ENCODE measurements at regions of chr11 and their contacts with region 1.

Region 1: DNA sequence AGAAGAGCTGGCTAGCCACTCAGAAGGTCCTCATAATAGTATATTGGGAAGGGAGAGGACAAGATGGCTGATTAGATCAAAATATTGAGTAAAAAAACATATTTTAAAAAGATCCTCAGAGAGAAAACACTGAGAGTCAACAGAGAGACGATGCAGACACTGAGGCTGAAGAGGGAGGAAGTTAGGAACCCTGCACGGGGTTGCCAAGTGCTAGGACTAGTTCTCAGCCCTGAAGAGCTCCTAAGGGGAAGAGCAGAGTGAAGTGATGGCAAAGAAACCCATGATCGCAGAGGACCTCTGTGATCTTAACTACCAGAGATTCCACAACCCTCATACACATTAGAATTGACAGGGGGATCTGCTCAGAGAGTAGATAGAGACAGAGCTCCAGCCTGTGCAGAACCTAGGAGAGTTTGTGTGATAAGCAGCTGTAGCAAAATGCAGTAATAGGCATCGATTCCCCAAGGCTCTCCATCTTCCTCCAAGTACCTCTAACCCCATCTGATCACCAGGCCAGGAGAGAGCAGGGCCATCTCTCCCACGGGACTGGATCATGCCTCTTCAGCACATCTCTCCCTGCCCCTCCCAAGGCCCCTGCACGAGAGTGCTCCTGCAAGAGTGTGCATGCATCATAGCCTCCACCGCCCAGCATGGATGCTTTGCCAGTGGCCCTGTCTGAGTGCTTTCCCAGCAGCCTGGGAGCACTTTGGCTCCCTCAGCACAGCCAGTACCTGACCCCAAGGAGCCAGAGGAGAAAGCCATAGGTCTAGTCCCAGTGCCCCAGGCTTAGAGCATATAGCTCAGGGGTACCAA is 41.2 kb upstream of the ARL14EP start:
- DNase-seq: no peak
- H3K4me3 ChIP-seq: no peak overlapping the region
- H3K27ac ChIP-seq: no peak overlapping the region
- H3K4me1 ChIP-seq: no peaks in the 10 kb centered on the region
- H3K27me3 ChIP-seq: no peaks in the 10 kb centered on the region
- CTCF ChIP-seq: no peak
- POLR2A ChIP-seq: no peak

Region 2: DNA sequence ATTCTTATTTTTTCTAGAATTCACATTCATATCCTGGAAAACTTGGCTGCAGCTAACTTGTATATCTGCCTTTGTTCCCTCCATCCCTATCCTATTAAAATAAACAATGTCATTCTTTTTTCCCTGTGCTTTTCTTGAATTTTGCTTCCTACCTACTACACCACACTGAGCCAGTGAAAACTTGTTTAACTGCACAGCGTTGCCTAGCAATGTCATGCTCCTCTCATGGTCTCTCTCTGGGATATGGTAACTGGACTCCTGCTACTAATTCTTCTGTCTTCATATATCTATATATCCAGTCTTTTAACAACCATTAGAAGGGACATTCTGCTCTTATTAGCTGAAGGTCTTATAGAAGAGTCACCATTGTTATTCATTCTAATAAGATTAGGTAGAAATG is 1739.1 kb before region 1 on chr11:
- intact Hi-C with region 1: no loop called
- DNase-seq: no peak
- H3K4me3 ChIP-seq: no peak overlapping the region
- H3K27ac ChIP-seq: no peak overlapping the region
- H3K4me1 ChIP-seq: no peaks in the 10 kb centered on the region
- H3K27me3 ChIP-seq: no peaks in the 10 kb centered on the region
- CTCF ChIP-seq: no peak
- POLR2A ChIP-seq: no peak

Region 3: GRCh38 chr11:30244265-30244664 is 37.4 kb before region 1 on chr11:
- intact Hi-C with region 1: no loop called
- DNase-seq: no peak
- H3K4me3 ChIP-seq: no peak overlapping the region
- H3K27ac ChIP-seq: no peak overlapping the region
- H3K4me1 ChIP-seq: no peaks in the 10 kb centered on the region
- H3K27me3 ChIP-seq: no peaks in the 10 kb centered on the region
- CTCF ChIP-seq: no peak
- POLR2A ChIP-seq: no peak

Region 4: GRCh38 chr11:30292545-30292944 is 10.9 kb after region 1 on chr11:
- intact Hi-C with region 1: loop called (anchors 1 kb)
- DNase-seq: no peak
- H3K4me3 ChIP-seq: no peak overlapping the region
- H3K27ac ChIP-seq: no peak overlapping the region
- H3K4me1 ChIP-seq: no peaks in the 10 kb centered on the region
- H3K27me3 ChIP-seq: no peaks in the 10 kb centered on the region
- CTCF ChIP-seq: no peak
- POLR2A ChIP-seq: no peak